ENCODE measurements at regions of chr12 and their contacts with region 1.

Region 1: DNA sequence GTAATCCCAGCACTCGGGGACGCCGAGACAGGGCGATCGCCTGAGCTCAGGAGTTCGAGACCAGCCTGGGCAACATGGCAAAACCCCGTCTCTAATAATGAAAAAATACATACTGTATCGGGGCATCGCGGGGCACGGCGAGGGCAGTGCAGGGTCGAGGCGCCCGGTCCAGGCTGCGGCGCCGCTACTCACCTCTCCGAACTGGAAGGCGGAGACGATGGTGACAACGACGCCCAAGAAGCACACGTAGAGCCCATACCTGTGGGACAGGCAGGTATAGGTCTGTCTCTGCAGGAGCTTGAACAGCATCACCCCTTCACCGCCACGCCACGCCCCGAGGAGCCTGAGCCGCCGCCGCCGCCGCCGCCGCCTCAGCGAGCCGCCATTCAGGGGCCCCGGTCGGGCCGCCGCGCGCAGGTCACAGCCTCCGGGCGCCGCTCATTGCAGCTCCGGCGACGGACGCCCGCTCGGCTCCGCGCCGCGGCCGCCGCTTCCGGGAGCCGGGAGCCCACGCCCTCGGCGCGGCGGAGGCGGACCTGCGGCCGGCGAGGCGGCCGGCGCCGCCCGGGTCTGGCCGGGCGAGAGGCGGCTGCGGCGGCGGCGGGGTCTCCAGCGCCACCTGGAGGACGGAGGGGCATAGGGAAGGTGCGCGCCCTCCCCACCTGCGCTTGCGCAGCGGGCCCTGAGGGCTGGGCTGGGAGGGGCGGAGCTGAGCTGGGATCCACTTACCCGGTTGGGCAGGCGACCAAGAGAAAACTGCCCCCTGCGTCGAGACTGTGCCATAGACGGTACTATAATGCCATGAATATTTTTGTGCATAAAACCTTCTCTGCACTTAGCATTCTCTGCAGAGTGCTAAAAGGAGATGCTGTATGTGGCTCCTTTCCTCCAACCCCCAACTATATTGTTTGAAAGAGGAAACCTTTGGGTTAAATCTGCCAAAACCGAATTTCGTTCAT is at the start of gene GNPTAB:
- DNase-seq: peak; percentile 81 to 88
- ATAC-seq: peak; percentile 84 to 88
- H3K4me3 ChIP-seq: peak within 1 kb of the TSS; percentile 69 to 90 (median 76)
- H3K27ac ChIP-seq: peak within 1 kb of the TSS; percentile 76 to 89 (median 82)
- H3K4me1 ChIP-seq: peaks cover 12 to 37% of the 10 kb centered on the region in 2 donors
- H3K27me3 ChIP-seq: no peaks in the 10 kb centered on the region
- CTCF ChIP-seq: peak; percentile 79 to 93 (median 90)
- POLR2A ChIP-seq: peak in 1 of 2 donors; percentile 61
- total RNA-seq, gene GNPTAB: 10.7 to 30.3 (median 16.2) TPM

Region 2: GRCh38 chr12:101773650-101774162 is 56.9 kb before region 1 on chr12:
- in situ Hi-C with region 1: loop called in 2 of 4 experiments (anchors 5 kb)
- intact Hi-C with region 1: loop called (anchors 1 kb)
- DNase-seq: peak; percentile 30 to 55
- ATAC-seq: peak; percentile 81 to 86
- H3K4me3 ChIP-seq: no peak overlapping the region
- H3K27ac ChIP-seq: peak overlapping the region in 1 of 4 donors; percentile 3
- H3K4me1 ChIP-seq: peaks cover 12 to 22% of the 10 kb centered on the region in 2 donors
- H3K27me3 ChIP-seq: no peaks in the 10 kb centered on the region
- CTCF ChIP-seq: peak; percentile 89 to 94 (median 91)
- POLR2A ChIP-seq: no peak

Region 3: GRCh38 chr12:101782273-101782731 is 48.3 kb before region 1 on chr12:
- in situ Hi-C with region 1: loop called in 2 of 4 experiments (anchors 5 kb)
- intact Hi-C with region 1: no loop called
- DNase-seq: no peak
- ATAC-seq: no peak
- H3K4me3 ChIP-seq: no peak overlapping the region
- H3K27ac ChIP-seq: peak overlapping the region; percentile 70 to 90 (median 78)
- H3K4me1 ChIP-seq: peaks cover 29 to 51% of the 10 kb centered on the region in 2 donors
- H3K27me3 ChIP-seq: no peaks in the 10 kb centered on the region
- CTCF ChIP-seq: no peak
- POLR2A ChIP-seq: no peak

Region 4: GRCh38 chr12:101792051-101792931 is 38.4 kb before region 1 on chr12:
- in situ Hi-C with region 1: no loop called
- intact Hi-C with region 1: loop called (anchors 1 kb)
- DNase-seq: no peak
- ATAC-seq: peak; percentile 78 to 89
- H3K4me3 ChIP-seq: no peak overlapping the region
- H3K27ac ChIP-seq: peak overlapping the region; percentile 12 to 74 (median 48)
- H3K4me1 ChIP-seq: peaks cover 14 to 21% of the 10 kb centered on the region in 2 donors
- H3K27me3 ChIP-seq: no peaks in the 10 kb centered on the region
- CTCF ChIP-seq: peak in 4 of 5 experiments; percentile 7 to 58 (median 40)
- POLR2A ChIP-seq: no peak

Region 5: GRCh38 chr12:102043928-102044327 is 213.3 kb after region 1 on chr12:
- in situ Hi-C with region 1: no loop called
- intact Hi-C with region 1: no loop called
- DNase-seq: no peak
- ATAC-seq: no peak
- H3K4me3 ChIP-seq: no peak overlapping the region
- H3K27ac ChIP-seq: no peak overlapping the region
- H3K4me1 ChIP-seq: no peaks in the 10 kb centered on the region
- H3K27me3 ChIP-seq: no peaks in the 10 kb centered on the region
- CTCF ChIP-seq: no peak
- POLR2A ChIP-seq: no peak

Measured in gastrocnemius medialis (tissue), 4 donors.